Activated T-helper 2 cell treated with anti-CD3 and anti-CD28 coated beads, Interferon-gamma antibody, Interleukin-2, Interleukin-4, amounts not matched to agents 10 μg/mL and 5 μg/mL and 100 μg/mL, durations not matched to agents 14 hours and 24 hours and 36 hours (primary cell): ENCODE measurements at regions of chr11 and their contacts with region 1.

Region 1: DNA sequence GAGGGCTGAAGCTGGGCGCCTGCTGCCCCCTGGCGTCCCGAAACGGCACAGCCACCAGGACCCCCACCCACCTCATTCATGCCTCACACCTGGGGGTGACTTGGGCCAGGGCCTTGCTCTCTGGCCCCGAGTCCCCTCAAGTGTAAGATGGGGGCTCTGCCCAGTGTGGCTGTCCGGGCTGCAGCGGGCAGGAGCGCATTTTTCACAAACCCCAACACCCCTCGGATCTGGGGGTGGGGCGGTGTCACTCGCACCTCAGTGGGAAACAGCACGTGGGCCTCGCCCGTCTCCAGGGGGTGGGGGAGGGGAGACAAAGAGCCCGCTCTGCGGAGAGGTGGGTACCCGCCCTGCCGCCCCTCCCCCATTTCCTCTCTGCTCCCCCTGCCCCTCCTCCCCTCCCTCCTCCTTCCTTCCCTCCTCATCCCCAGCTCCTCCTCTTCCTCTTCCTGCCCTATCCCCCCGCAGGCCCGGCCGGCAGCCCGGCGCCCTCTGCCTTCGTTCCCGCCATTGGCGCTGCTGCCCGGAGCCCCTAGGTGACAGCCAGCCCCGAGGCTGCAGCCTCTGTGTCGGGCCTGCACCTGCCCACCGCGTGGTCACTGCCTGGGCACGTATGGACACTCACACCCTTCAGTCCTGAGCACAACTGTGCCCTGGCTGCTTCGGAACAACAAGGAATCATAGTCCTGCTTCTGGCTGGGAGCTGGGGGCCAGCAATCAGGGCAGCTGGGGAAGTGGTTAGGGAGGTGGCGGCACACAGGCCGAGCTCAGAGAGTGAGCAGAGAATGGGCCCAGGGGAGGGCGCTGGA is 6.8 kb upstream of the CDKN1C start:
- DNase-seq: peak; percentile 59
- H3K4me3 Mint-ChIP-seq: peak overlapping the region; percentile 83
- H3K27ac Mint-ChIP-seq: peak overlapping the region; percentile 72
- H3K4me1 Mint-ChIP-seq: peaks cover 9% of the 10 kb centered on the region
- H3K27me3 Mint-ChIP-seq: peaks cover under 1% of the 10 kb centered on the region

Region 2: GRCh38 chr11:2532704-2533586 is 359.5 kb before region 1 on chr11:
- intact Hi-C with region 1: loop called (anchors 1 kb)
- DNase-seq: peak; percentile 84
- H3K4me3 Mint-ChIP-seq: no peak overlapping the region
- H3K27ac Mint-ChIP-seq: peak overlapping the region; percentile 11
- H3K4me1 Mint-ChIP-seq: peaks cover 7% of the 10 kb centered on the region
- H3K27me3 Mint-ChIP-seq: no peaks in the 10 kb centered on the region

Region 3: GRCh38 chr11:2930704-2931428 is 38.4 kb after region 1 on chr11:
- intact Hi-C with region 1: loop called (anchors 5 kb)
- DNase-seq: no peak
- H3K4me3 Mint-ChIP-seq: peak overlapping the region; percentile 82
- H3K27ac Mint-ChIP-seq: peak overlapping the region; percentile 92
- H3K4me1 Mint-ChIP-seq: peaks cover 24% of the 10 kb centered on the region
- H3K27me3 Mint-ChIP-seq: peaks cover 15% of the 10 kb centered on the region